G401 (cell line): ENCODE measurements at regions of chr2 and their contacts with region 1.

Region 1: GRCh38 chr2:235621736-235622135 is 127.9 kb downstream of the AGAP1 start:
- DNase-seq: no peak

Region 2: DNA sequence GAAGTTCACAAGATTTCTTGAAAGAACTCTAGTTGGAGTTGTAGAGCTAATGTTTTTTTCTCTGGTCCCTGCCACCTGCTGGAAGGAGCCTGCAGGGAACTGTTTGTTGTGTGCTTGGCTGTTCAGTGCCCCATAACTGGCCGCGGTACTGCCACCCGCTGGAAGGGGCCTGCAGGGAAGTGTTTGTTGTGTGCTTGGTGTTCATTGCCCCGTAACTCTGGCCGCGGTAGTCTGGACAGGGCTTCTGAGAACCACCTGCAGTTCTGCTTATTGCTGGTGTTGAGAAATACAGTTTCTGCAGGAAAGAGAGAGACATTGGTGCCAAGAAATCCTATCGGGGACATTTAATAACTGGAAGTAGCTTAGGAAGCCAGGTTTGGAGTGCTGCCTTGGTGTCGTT is 69.8 kb before region 1 on chr2:
- in situ Hi-C with region 1: loop called (anchors 10 kb)
- DNase-seq: peak; percentile 72

Region 3: DNA sequence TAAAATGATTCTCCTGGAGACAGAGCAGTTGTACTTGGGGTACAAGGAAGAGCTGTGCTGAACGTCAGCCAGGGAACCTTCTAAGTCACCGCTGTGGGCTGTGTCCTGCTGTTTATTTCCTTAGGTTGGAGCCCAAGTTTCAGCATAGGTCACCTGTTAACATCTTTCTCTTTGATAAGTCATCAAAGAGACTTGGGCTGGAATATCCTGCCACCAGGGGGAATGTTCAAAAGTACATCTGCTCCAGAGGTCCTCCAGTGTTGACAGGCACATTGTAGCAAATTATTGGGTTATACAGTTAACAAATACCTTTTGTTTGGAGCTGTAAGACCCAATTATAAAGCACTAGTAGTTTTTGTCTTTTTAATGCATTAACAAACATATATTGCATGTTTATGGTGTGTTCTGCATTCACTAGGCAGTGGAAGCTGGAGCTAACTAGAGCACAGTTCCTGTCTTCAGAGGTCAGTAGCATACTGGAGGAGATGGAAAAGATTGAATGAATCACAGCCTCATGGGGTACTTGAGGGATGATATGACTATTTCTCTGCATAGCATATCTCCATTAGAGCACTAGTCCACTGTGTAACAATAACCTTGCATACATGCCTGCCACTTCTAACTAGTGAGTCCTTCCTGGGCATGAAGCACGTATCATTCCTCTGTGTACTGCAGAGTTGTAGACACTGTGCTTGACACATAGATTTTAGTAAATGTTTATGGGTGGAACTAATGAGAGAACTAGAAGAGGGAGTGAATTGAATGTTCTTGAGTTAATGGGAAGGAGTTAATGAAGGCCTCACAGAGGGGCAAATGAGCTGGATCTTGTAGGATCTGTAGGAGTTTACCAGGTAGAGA is 54.2 kb after region 1 on chr2:
- in situ Hi-C with region 1: no loop called
- DNase-seq: no peak